K562 (cell line): ENCODE measurements at regions of chr16 and their contacts with region 1.

Region 1: DNA sequence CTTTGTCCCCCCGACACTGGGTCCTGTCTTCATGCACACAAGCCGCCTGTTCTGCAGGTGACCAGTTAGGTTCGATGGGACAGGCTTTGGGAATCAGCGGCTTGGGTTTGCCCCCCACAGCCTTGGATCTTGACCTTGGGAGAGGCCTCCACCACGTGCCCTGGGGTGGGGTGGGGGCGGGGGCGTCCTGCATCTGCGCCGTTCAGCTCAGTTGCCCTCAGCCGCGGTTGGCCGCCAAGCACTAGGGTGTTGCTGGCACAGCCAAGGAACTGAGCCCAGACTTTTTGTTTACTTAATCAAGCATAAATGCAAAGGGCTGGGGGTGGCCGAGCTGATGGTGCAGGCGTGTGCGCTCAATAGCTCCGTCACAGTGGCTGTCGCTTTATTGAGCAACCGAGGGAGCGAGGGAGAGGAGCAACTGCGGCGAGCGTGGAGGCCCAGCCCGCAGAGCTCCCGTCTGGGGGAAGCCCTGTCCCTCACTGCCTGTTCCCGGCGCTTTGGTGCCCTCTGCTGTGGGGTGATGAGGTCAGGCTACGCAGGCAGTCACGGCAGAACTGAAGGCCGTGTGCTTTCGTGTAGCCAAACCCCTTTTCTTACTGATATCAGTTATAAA is 33.9 kb downstream of the JPH3 start:
- DNase-seq: peak; percentile 83 to 89 (median 84)
- ATAC-seq: peak; percentile 98
- H3K4me3 ChIP-seq: no peak overlapping the region
- H3K27ac ChIP-seq: no peak overlapping the region
- H3K4me1 ChIP-seq: peaks cover 0 to 18% of the 10 kb centered on the region in 2 experiments; a peak in 3 of 5 replicates
- H3K27me3 ChIP-seq: peaks cover 36 to 79% of the 10 kb centered on the region in 2 experiments
- CTCF ChIP-seq: peak; percentile 83 to 88 (median 88)
- EP300 ChIP-seq: no peak
- POLR2A ChIP-seq: no peak
- RAD21 ChIP-seq: peak; percentile 86 to 92

Region 2: DNA sequence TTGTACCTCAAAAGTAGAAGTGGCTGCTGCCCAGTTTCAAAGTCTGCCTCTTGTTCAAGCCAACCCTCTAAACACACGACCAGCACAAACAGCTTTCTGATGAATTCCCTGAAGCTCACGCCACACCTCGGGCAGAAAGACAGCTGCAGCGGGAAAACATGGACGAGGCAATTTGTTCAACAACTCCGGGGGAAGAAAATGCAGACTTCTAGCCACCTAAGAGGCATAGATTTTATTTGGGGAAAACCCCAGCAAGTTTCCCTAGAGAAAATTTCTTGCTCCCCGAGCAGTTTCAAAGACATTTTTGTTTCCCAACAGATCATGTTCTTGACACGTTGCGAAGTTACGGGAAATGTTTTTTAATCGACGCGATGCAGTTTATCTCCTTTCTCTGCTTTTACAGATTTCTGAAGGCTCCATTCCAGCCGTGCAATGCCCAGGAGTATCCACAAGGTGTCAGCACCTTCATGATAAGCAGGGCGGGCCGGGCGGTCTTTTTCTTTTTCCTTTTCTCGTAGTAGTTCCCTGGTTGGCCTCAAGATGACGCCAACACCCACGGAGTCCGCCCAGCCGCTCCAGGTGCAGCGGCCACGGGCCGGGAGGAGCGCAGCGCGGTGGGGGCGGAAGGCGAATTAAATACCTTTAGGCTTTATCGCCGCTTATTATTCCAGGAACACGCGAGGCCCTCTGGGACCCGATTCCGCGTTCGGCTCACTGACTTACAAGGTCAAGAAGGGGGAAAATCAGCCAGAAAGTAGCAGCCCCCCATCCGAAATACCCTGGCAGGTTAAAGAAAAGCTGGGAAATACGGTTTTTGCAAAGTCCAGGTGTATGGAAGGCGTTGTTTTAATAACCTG is 1072.5 kb before region 1 on chr16:
- CTCF ChIA-PET with region 1: interaction called, 11 read pairs
- POLR2A ChIA-PET with region 1: no interaction called
- in situ Hi-C with region 1: loop called (anchors 25 kb)
- intact Hi-C with region 1: loop called (anchors 5 kb)
- DNase-seq: peak; percentile 86 to 90 (median 88)
- ATAC-seq: peak; percentile 97
- H3K4me3 ChIP-seq: no peak overlapping the region
- H3K27ac ChIP-seq: no peak overlapping the region
- H3K4me1 ChIP-seq: peaks cover 0 to 10% of the 10 kb centered on the region in 2 experiments; a peak in 1 of 5 replicates
- H3K27me3 ChIP-seq: peaks cover 26 to 46% of the 10 kb centered on the region in 2 experiments; a peak in 4 of 5 replicates
- CTCF ChIP-seq: peak; percentile 99 to 100 (median 100)
- EP300 ChIP-seq: no peak
- POLR2A ChIP-seq: no peak
- RAD21 ChIP-seq: peak; percentile 99 to 100

Region 3: GRCh38 chr16:87278191-87279095 is 357.7 kb before region 1 on chr16:
- CTCF ChIA-PET with region 1: no interaction called
- POLR2A ChIA-PET with region 1: no interaction called
- in situ Hi-C with region 1: no loop called
- intact Hi-C with region 1: no loop called
- DNase-seq: peak; percentile 71 to 82 (median 80)
- ATAC-seq: peak; percentile 100
- H3K4me3 ChIP-seq: no peak overlapping the region
- H3K27ac ChIP-seq: no peak overlapping the region
- H3K4me1 ChIP-seq: peaks cover 0 to 13% of the 10 kb centered on the region in 2 experiments; a peak in 2 of 5 replicates
- H3K27me3 ChIP-seq: no peaks in the 10 kb centered on the region
- CTCF ChIP-seq: peak; percentile 89 to 92 (median 90)
- EP300 ChIP-seq: no peak
- POLR2A ChIP-seq: no peak
- RAD21 ChIP-seq: peak; percentile 68 to 82

Region 4: GRCh38 chr16:87387942-87388817 is 248.0 kb before region 1 on chr16:
- CTCF ChIA-PET with region 1: no interaction called
- POLR2A ChIA-PET with region 1: no interaction called
- in situ Hi-C with region 1: no loop called
- intact Hi-C with region 1: loop called (anchors 5 kb)
- DNase-seq: peak; percentile 83 to 98 (median 92)
- ATAC-seq: peak; percentile 84
- H3K4me3 ChIP-seq: no peak overlapping the region
- H3K27ac ChIP-seq: peak overlapping the region; percentile 97
- H3K4me1 ChIP-seq: peaks cover 28 to 40% of the 10 kb centered on the region in 2 experiments; a peak in 4 of 5 replicates
- H3K27me3 ChIP-seq: no peaks in the 10 kb centered on the region
- CTCF ChIP-seq: no peak
- EP300 ChIP-seq: peak; percentile 93
- POLR2A ChIP-seq: peak; percentile 74
- RAD21 ChIP-seq: no peak

Region 5: GRCh38 chr16:87550496-87550961 is 85.6 kb before region 1 on chr16:
- CTCF ChIA-PET with region 1: interaction called, 23 read pairs
- POLR2A ChIA-PET with region 1: no interaction called
- in situ Hi-C with region 1: no loop called
- intact Hi-C with region 1: loop called (anchors 5 kb)
- DNase-seq: peak; percentile 61 to 77 (median 74)
- ATAC-seq: peak; percentile 81
- H3K4me3 ChIP-seq: no peak overlapping the region
- H3K27ac ChIP-seq: no peak overlapping the region
- H3K4me1 ChIP-seq: peaks cover 0 to 18% of the 10 kb centered on the region in 2 experiments; a peak in 3 of 5 replicates
- H3K27me3 ChIP-seq: peaks cover 41 to 80% of the 10 kb centered on the region in 2 experiments
- CTCF ChIP-seq: peak; percentile 79 to 93 (median 84)
- EP300 ChIP-seq: no peak
- POLR2A ChIP-seq: no peak
- RAD21 ChIP-seq: peak; percentile 47 to 79

Region 6: GRCh38 chr16:88035292-88035691 is 399.1 kb after region 1 on chr16:
- CTCF ChIA-PET with region 1: no interaction called
- POLR2A ChIA-PET with region 1: no interaction called
- in situ Hi-C with region 1: no loop called
- intact Hi-C with region 1: no loop called
- DNase-seq: no peak
- ATAC-seq: no peak
- H3K4me3 ChIP-seq: no peak overlapping the region
- H3K27ac ChIP-seq: no peak overlapping the region
- H3K4me1 ChIP-seq: no peaks in the 10 kb centered on the region
- H3K27me3 ChIP-seq: no peaks in the 10 kb centered on the region
- CTCF ChIP-seq: no peak
- EP300 ChIP-seq: no peak
- POLR2A ChIP-seq: no peak
- RAD21 ChIP-seq: no peak

Region 7: DNA sequence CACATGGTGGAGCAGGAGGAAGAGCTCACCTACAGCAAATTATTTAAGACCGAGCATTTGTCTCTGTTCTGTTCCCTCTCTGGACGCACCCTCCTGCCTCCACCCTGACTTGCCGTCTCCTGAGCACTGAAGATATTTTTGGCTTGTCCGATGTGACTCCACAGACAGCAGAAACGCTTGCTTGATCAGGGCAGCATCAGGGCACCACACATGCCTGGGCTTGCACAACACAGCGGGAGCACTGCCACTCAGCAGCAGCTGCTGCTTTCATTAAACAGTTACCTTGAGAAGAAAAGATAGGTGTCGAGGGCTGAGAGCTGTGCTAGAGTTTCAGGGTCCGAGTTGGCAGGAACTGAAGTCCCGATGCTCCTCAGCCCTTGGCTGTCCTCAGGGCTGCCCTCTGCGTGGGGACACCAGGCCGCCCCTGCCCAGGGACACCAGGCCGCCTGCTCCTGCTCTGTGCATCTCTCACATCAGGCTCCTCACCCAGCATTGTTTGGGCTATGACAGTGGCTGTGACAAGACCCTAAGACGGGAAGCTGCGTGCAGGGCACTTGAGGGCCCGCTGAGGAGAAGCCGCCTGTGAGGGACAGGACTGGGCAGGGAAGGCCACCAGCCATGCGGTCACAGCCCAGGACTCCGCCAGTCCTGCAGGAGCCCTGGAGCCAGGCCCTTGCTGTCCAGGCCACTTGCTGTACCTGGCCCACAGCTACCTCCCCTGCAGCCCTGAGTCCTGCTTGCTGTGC is 1514.1 kb after region 1 on chr16:
- CTCF ChIA-PET with region 1: no interaction called
- POLR2A ChIA-PET with region 1: no interaction called
- in situ Hi-C with region 1: no loop called
- intact Hi-C with region 1: no loop called
- DNase-seq: no peak
- ATAC-seq: no peak
- H3K4me3 ChIP-seq: no peak overlapping the region
- H3K27ac ChIP-seq: no peak overlapping the region
- H3K4me1 ChIP-seq: peaks cover 0 to 33% of the 10 kb centered on the region in 2 experiments; a peak in 3 of 5 replicates
- H3K27me3 ChIP-seq: no peaks in the 10 kb centered on the region
- CTCF ChIP-seq: no peak
- EP300 ChIP-seq: no peak
- POLR2A ChIP-seq: no peak
- RAD21 ChIP-seq: no peak